Motor neuron (in vitro differentiated cells): ENCODE measurements at regions of chr1 and their contacts with region 1.

Region 1: DNA sequence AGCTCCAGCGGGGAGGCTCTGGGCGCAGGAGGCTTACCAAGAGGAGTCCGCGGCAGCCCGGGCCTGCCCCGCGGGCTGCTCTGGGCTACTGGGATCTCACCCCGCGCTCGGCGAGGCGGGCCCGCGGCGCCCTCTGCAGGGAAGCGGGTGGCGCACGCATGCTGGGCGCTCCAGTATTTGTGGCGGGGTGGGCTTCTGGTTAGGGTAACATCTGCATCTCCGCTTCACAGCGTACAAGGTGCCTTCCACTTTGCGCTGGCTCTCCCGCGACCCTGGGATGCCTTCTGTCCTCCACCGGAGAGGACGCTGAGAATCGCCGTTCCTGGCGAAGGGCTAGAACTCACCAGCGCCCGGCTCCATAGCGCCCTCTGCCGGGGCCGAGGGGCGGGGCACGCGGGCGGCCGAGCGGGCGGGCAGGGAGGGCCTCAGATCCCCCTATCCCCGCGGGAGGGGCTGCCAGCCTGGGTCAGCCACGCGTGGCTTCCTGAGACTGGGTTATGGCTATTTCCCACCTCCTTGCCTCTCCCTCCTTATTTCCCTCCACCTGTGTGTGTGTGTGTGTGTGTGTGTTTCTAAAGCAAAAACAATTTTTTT is 46.6 kb upstream of the CTBS start:
- ATAC-seq: peak; percentile 87 to 97 (median 90)
- H3K4me3 ChIP-seq: peak overlapping the region; percentile 21 to 46 (median 41)
- H3K27ac ChIP-seq: peak overlapping the region in 1 of 2 donors; percentile 19
- H3K4me1 ChIP-seq: peaks cover 18 to 25% of the 10 kb centered on the region in 2 donors

Region 2: GRCh38 chr1:84143796-84144565 is 476.8 kb before region 1 on chr1 and contains the start of gene PRKACB:
- in situ Hi-C with region 1: loop called in 1 of 9 experiments (anchors 25 kb)
- ATAC-seq: no peak
- H3K4me3 ChIP-seq: no peak within 1 kb of the TSS
- H3K27ac ChIP-seq: no peak within 1 kb of the TSS
- H3K4me1 ChIP-seq: no peaks in the 10 kb centered on the region
- total RNA-seq, gene PRKACB: 21.7 to 120 (median 51.3) TPM

Region 3: GRCh38 chr1:84506002-84506728 is 114.7 kb before region 1 on chr1 and contains the starts of genes GNG5 and SPATA1:
- in situ Hi-C with region 1: loop called in 1 of 9 experiments (anchors 25 kb)
- ATAC-seq: peak; percentile 83 to 96 (median 93)
- H3K4me3 ChIP-seq: peak within 1 kb of the TSS; percentile 80 to 96 (median 90)
- H3K27ac ChIP-seq: peak within 1 kb of the TSS; percentile 64 to 83
- H3K4me1 ChIP-seq: peaks cover 10 to 28% of the 10 kb centered on the region in 2 donors
- total RNA-seq, gene GNG5: 59.2 to 175 (median 83.1) TPM
- total RNA-seq, gene SPATA1: 0.67 to 3.3 (median 1.6) TPM

Region 4: GRCh38 chr1:84742653-84743052 is 121.8 kb after region 1 on chr1:
- in situ Hi-C with region 1: loop called in 1 of 9 experiments (anchors 10 kb)
- ATAC-seq: peak in 1 of 8 experiments; percentile 38
- H3K4me3 ChIP-seq: no peak overlapping the region
- H3K27ac ChIP-seq: no peak overlapping the region
- H3K4me1 ChIP-seq: peaks cover 0 to 2% of the 10 kb centered on the region in 2 donors